Gastrocnemius medialis (tissue), 4 donors: ENCODE measurements at regions of chr2 and their contacts with region 1.

Region 1: DNA sequence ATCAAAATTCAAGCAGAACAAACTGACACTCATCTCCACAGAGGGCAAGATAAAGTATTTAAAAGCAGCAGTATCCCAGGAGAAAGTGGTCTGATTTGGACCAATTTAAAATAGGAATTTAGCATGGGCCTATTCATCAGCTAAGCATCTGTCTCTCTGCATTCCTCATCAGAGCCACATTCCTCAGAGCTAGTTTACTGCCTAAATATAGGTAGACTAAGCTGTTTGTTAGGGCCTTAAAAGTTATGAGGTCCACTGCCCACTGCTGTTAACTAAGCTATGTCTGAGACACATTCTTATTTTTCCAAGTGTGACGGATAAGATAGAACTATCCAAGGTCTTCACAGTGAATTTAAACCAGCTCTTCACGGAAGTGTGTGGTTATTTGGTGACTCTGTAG is 17.6 kb downstream of the NEB start:
- DNase-seq: no peak
- ATAC-seq: no peak
- H3K4me3 ChIP-seq: no peak overlapping the region
- H3K27ac ChIP-seq: peak overlapping the region; percentile 81 to 93 (median 86)
- H3K4me1 ChIP-seq: peaks cover 58% of the 10 kb centered on the region in 2 donors
- H3K27me3 ChIP-seq: no peaks in the 10 kb centered on the region
- CTCF ChIP-seq: no peak
- POLR2A ChIP-seq: no peak

Region 2: DNA sequence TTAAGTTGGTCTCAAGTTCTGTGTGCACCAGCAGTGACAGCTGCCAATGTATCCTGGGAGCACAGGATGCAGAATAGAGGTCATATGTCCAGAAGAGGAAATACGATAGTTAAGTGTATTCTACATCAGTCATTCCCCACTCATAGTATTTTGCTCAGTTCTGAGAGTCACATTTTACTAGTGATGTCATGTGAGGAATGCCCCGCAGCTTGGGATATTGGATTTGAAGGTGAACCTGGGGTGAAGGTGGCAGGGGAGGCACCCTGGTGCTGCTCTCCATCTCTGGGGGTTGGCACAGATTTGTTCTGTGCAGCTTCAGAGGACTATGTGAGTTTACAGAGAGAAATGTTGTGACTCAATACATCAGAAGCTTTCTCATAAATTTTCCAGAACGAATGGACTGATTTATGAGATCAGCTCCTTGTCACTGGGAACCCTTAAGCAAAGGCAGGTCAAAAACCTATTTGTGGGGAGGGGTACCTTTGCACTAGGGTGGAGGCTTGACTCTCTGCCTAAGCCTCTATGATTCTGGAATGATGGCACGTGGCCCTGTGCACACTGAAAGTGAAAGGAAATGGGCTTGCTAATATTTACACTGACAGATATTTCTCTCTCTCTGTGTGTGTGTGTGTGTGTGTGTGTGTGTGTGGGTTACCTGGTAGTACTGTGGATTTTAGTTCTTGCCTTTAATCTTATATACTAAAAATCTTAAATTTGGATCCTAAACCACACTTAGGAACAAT is 78.4 kb before region 1 on chr2:
- in situ Hi-C with region 1: loop called in 1 of 4 experiments (anchors 10 kb)
- intact Hi-C with region 1: no loop called
- DNase-seq: peak in 1 of 2 donors; percentile 48
- ATAC-seq: peak; percentile 70 to 86
- H3K4me3 ChIP-seq: no peak overlapping the region
- H3K27ac ChIP-seq: peak overlapping the region in 3 of 4 donors; percentile 39 to 72 (median 65)
- H3K4me1 ChIP-seq: peaks cover 6 to 7% of the 10 kb centered on the region in 2 donors
- H3K27me3 ChIP-seq: no peaks in the 10 kb centered on the region
- CTCF ChIP-seq: no peak
- POLR2A ChIP-seq: no peak

Region 3: GRCh38 chr2:151891566-151892194 is 175.0 kb after region 1 on chr2:
- in situ Hi-C with region 1: no loop called
- intact Hi-C with region 1: no loop called
- DNase-seq: peak; percentile 19 to 44
- ATAC-seq: peak; percentile 76 to 86
- H3K4me3 ChIP-seq: peak overlapping the region; percentile 14 to 56 (median 26)
- H3K27ac ChIP-seq: no peak overlapping the region
- H3K4me1 ChIP-seq: peaks cover 0 to 13% of the 10 kb centered on the region in 2 donors
- H3K27me3 ChIP-seq: no peaks in the 10 kb centered on the region
- CTCF ChIP-seq: no peak
- POLR2A ChIP-seq: no peak

Region 4: DNA sequence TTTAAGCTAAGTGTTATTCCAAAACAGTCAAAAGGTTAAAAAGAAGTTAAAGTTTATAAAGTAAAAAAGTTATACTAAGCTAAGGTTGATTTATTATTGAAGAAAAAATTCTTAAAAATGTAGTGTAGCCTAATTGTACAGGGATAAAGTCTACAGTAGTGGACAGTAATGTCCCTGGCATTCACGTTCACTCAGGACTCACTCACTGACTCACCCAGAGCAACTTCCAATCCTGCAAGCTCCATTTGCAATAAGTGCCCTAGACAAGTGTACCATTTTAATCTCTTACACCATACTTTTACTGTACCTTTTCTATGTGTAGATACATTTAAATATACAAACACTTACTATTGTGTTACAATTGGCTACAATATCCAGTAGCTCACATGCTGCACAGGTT is 296.0 kb after region 1 on chr2:
- in situ Hi-C with region 1: no loop called
- intact Hi-C with region 1: no loop called
- DNase-seq: no peak
- ATAC-seq: no peak
- H3K4me3 ChIP-seq: no peak overlapping the region
- H3K27ac ChIP-seq: no peak overlapping the region
- H3K4me1 ChIP-seq: no peaks in the 10 kb centered on the region
- H3K27me3 ChIP-seq: no peaks in the 10 kb centered on the region
- CTCF ChIP-seq: no peak
- POLR2A ChIP-seq: no peak